ENCODE measurements at regions of chr7 and their contacts with region 1.

Region 1: GRCh38 chr7:158829342-158830210 is at the start of gene ESYT2:
- DNase-seq: peak; percentile 100
- ATAC-seq: peak; percentile 94
- total RNA-seq, gene ESYT2: 43.8 TPM

Region 2: DNA sequence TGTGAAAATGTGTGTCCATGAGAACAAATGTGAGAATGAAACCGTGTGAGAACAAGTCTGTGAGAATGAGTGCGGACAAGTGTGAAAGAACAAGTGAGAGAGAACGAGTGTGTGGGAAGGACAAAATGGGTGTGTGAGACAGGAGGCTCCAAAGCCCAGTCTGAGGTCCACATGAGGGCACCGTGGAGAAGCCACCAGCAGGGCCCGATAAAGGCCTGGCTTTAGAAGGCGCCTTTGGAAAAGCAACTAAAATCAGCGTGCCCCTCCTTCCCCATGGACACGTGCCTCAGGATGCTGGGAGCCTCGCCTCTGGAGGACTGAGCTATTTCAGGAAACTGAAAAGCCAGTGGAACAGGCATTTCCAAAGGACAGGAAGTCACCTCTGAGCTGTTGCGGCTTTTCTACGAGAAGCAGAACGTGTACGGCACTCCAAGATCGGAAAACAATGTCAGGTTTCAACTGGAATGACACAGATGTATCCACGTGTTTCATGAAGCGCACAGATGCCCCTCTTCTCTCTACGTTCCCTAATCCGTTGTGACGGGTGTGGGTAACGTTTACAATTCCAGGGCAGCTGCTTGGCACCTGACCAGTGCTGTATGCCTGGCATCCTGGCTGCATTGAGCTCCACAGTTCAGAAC is 46.7 kb before region 1 on chr7:
- intact Hi-C with region 1: loop called (anchors 5 kb)
- DNase-seq: peak; percentile 78
- ATAC-seq: peak; percentile 89